ENCODE measurements at regions of chr20 and their contacts with region 1.

Region 1: DNA sequence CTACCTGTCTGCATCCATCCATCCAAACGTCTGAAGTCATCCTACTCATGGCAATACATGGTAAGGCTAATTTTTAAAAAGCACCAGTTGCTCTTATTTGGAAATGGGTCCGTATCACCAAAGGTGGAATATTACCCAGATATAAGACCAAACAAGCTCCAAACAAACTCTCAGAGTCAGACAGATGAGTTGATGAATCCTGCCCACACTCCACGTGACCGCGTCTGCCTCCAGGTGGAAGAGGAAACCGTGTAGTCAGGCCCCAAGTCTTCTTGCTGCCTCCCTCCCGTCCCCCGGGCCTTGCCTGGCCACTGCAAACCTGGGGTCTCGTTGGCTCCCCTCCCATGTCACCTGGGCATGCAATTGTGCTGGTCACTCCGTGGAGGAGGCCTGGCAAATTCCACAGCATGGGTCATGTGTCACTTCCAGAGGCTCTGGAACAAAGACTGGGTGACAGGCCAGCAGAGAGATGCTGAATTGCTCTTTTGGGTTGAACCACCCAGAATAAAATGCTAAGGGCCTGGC is 31.8 kb downstream of the CTCFL start:
- DNase-seq: no peak
- H3K4me3 ChIP-seq: no peak overlapping the region
- H3K27ac ChIP-seq: no peak overlapping the region
- H3K4me1 ChIP-seq: peaks cover 0 to 6% of the 10 kb centered on the region in 2 donors
- H3K27me3 ChIP-seq: peaks cover 8% of the 10 kb centered on the region
- CTCF ChIP-seq: no peak
- POLR2A ChIP-seq: no peak

Region 2: DNA sequence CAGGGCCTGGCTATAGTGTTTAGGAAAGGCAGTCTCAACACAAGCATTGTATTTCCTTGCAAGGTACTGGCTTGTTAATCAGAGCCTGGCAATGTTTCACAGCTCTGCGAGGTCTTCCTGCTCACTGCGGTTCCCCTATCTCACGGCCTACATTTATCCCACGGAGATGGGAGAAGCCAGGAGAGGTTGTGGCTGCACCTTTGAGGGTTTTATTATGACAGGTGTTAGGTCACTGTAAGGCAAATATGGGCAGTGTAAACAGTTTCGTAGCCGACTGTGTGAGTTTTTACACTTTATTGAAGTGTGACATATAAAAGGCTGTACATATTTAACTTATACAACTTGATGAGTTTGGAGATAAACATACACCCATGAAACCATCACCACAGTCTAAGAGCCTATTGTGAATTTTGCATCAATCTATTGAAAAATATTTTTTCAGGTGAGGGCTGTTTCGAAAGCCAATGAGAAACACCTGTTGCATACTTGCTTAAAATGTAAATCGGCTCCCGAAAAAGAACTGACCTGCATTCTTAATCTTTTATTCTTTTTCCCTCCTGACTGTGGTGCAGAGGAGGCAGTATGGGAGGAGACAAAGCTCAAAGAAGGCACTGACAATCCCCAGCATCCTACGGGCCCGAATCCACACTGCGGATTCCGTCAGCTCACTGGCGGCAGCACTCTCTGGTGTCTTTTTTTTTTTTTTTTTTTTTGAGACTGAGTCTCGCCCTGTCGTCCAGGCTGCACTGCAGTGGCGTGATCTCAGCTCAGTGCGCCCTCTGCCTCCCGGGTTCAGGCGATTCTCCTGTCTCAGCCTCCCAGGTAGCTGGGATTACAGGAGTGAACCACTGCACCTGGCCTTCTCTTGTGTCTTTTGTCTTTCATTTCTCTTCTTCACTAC is 109.5 kb before region 1 on chr20:
- intact Hi-C with region 1: loop called (anchors 2 to 5 kb)
- DNase-seq: peak in 1 of 7 donors; percentile 5
- H3K4me3 ChIP-seq: no peak overlapping the region
- H3K27ac ChIP-seq: no peak overlapping the region
- H3K4me1 ChIP-seq: peaks cover 6 to 7% of the 10 kb centered on the region in 2 donors
- H3K27me3 ChIP-seq: no peaks in the 10 kb centered on the region
- CTCF ChIP-seq: no peak
- POLR2A ChIP-seq: no peak

Region 3: GRCh38 chr20:57560554-57561355 is 67.6 kb after region 1 on chr20 and contains the start of gene PCK1:
- intact Hi-C with region 1: no loop called
- DNase-seq: peak; percentile 49 to 73 (median 71)
- H3K4me3 ChIP-seq: no peak within 1 kb of the TSS
- H3K27ac ChIP-seq: no peak within 1 kb of the TSS
- H3K4me1 ChIP-seq: peaks cover 0 to 4% of the 10 kb centered on the region in 2 donors
- H3K27me3 ChIP-seq: peaks cover 3% of the 10 kb centered on the region
- CTCF ChIP-seq: no peak
- POLR2A ChIP-seq: no peak
- total RNA-seq, gene PCK1: 0.06 to 4.7 (median 0.68) TPM

Measured in adrenal gland (tissue), 19 donors.